Adrenal gland (tissue), 19 donors: ENCODE measurements at regions of chr1 and their contacts with region 1.

Region 1: GRCh38 chr1:48055876-48056764 is 58.9 kb upstream of the TRABD2B start:
- DNase-seq: no peak
- H3K4me3 ChIP-seq: no peak overlapping the region
- H3K27ac ChIP-seq: no peak overlapping the region
- H3K4me1 ChIP-seq: no peaks in the 10 kb centered on the region
- H3K27me3 ChIP-seq: no peaks in the 10 kb centered on the region
- CTCF ChIP-seq: no peak
- POLR2A ChIP-seq: no peak

Region 2: DNA sequence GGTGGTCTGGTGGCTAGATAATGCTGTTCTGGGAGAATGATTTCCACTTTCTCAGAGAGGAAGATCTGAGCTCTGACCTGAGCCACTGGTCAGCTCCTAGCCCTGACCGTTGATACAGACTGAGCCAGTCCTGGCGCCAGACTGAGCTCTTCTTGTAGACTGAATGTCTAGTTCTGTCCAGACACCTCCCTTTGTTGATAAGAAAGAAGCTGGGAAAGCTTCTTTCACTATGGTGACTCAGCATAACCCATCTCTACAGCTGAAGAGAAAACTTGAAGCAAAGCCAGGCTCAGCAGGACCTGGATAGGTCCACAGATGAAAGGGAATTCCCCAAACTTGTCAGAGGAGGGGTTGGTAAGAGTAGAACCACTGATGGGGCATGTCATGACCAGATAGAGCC is 49.1 kb before region 1 on chr1:
- intact Hi-C with region 1: loop called in 1 of 2 experiments (anchors 10 kb)
- DNase-seq: peak in 4 of 7 donors; percentile 20 to 45 (median 28)
- H3K4me3 ChIP-seq: no peak overlapping the region
- H3K27ac ChIP-seq: no peak overlapping the region
- H3K4me1 ChIP-seq: no peaks in the 10 kb centered on the region
- H3K27me3 ChIP-seq: no peaks in the 10 kb centered on the region
- CTCF ChIP-seq: no peak
- POLR2A ChIP-seq: no peak